ENCODE measurements at regions of chr11 and their contacts with region 1.

Region 1: DNA sequence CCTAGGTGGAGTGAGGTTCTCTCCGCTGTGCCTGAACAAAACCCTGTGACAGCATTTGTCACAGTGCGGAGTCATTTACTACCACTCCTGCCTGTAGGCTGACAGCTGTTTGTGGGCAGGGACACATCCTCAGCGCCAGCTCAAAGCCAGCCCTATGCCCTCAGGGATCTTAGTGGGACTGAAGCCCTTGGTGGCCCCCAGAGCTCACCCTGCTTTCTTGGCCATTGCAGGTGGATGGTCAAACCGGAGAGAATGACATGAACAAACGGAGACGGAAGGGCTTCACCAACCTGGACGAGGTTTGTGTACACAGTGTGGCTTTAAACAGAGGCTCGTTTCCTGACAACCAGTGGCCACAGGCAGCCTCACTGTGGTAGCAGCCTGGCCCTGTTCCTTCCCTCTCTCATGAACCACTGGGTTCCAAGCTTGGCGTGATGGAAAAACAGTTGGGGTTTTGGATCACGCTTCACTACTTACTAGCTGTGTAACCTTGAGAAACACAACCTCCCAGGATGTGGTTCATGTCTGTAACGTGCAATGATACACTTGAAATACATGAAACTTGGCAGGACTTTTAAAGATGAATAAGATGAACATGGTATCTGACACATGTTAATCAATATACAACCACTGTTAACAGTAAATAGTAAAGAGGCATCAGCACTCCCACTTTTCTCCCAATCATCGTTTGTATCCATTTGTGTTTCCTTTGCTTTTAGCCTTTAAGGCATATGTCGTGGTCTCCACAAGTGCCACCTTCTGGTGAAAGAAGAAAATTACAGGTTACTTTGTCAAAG is 125.8 kb downstream of the MICAL2 start:
- DNase-seq: no peak
- H3K4me3 ChIP-seq: no peak overlapping the region
- H3K27ac ChIP-seq: peak overlapping the region; percentile 82 to 89 (median 88)
- H3K4me1 ChIP-seq: peaks cover 18 to 98% (median 91%) of the 10 kb centered on the region in 4 donors
- H3K27me3 ChIP-seq: no peaks in the 10 kb centered on the region
- CTCF ChIP-seq: peak; percentile 52 to 73 (median 72)
- EP300 ChIP-seq: no peak
- POLR2A ChIP-seq: no peak

Region 2: GRCh38 chr11:11856638-11857037 is 379.5 kb before region 1 on chr11:
- intact Hi-C with region 1: no loop called
- DNase-seq: no peak
- H3K4me3 ChIP-seq: no peak overlapping the region
- H3K27ac ChIP-seq: no peak overlapping the region
- H3K4me1 ChIP-seq: peaks cover 38 to 92% (median 77%) of the 10 kb centered on the region in 4 donors
- H3K27me3 ChIP-seq: no peaks in the 10 kb centered on the region
- CTCF ChIP-seq: no peak
- EP300 ChIP-seq: no peak
- POLR2A ChIP-seq: no peak

Region 3: DNA sequence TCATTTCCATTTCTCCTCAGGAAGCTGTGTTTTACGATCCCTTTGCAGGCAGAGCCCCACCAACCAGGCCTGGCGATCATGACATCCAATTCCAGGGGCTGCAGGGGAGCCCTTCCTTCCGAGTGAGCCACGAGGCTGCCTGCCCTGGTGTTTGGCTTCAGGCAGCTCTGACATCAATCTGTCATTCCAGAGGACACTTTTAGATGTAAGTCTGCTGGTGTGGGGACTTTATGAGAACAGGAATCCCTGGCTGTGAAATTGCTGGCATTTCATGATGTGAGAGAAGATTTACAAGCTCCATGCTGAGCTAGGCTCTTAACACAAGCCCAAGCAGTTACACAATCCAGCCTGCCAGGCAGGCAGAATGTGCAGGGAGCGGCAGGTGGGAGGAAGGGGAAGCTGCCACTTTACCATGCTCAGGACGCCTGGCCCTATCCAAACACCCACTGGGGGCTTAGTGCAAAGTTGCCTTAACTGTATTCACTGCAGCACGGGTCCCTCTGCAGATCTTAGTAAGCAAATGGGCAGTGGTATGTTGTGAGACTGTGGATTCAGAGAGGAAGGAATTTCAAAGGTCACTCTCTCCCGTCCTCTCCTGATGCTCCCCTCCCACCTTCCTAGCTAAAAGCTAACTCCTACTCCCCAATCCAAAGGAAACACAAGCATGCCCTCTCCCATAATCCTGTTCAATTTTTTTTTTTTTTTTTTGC is 169.2 kb before region 1 on chr11:
- intact Hi-C with region 1: no loop called
- DNase-seq: no peak
- H3K4me3 ChIP-seq: no peak overlapping the region
- H3K27ac ChIP-seq: peak overlapping the region; percentile 65 to 74 (median 68)
- H3K4me1 ChIP-seq: peaks cover 13 to 39% (median 33%) of the 10 kb centered on the region in 4 donors
- H3K27me3 ChIP-seq: no peaks in the 10 kb centered on the region
- CTCF ChIP-seq: no peak
- EP300 ChIP-seq: no peak
- POLR2A ChIP-seq: no peak

Region 4: GRCh38 chr11:12110201-12110713 is 125.9 kb before region 1 on chr11 and contains the start of gene MICAL2:
- intact Hi-C with region 1: loop called (anchors 5 kb)
- DNase-seq: peak; percentile 95
- H3K4me3 ChIP-seq: peak within 1 kb of the TSS; percentile 65 to 97 (median 88)
- H3K27ac ChIP-seq: peak within 1 kb of the TSS; percentile 92 to 98 (median 97)
- H3K4me1 ChIP-seq: peaks cover 27 to 54% (median 51%) of the 10 kb centered on the region in 4 donors
- H3K27me3 ChIP-seq: no peaks in the 10 kb centered on the region
- CTCF ChIP-seq: no peak
- EP300 ChIP-seq: no peak
- POLR2A ChIP-seq: no peak
- total RNA-seq, gene MICAL2: 195 to 499 (median 259) TPM

Region 5: DNA sequence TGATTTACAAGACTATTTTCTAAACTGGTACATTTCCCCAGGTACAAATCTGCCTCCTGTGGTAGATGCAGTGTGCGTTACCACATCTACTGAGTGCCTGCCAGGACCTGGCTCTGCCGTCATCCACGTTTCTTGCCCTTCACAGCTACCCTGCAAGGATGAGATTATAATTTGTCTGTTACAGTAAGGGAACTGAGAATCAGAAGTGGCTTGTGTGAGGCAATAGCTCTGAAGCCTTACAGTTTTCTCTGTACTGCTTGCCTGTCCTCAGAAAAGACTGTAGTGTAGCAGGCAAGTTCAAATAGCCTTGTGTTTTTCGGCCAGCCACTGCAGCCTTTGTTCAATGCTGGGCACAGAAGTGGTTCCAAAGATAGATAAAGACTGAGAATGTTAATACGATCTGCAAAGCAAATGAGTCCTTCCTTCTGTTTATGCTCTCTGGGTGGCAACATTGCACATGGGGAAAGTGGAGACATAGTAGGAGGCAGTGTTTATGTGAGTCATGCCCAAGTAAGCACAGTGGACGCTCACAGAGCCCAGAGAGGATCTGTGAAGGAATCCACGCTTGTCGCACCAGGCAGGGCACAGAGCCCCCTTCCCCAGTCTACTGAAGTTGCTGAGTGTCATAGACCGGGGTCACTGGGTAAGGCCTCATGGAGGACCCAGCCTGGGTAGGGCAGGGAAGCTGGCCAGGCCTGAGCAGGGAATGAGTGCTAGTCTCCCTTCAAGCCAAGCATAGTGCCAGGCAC is 76.6 kb before region 1 on chr11:
- intact Hi-C with region 1: loop called (anchors 10 kb)
- DNase-seq: no peak
- H3K4me3 ChIP-seq: peak overlapping the region in 1 of 4 donors; percentile 11
- H3K27ac ChIP-seq: peak overlapping the region; percentile 87 to 91 (median 90)
- H3K4me1 ChIP-seq: peaks cover 68 to 98% (median 95%) of the 10 kb centered on the region in 4 donors
- H3K27me3 ChIP-seq: no peaks in the 10 kb centered on the region
- CTCF ChIP-seq: no peak
- EP300 ChIP-seq: no peak
- POLR2A ChIP-seq: no peak

Measured in esophagus muscularis mucosa (tissue), 4 donors.